Natural killer cell (primary cell): ENCODE measurements at regions of chr12 and their contacts with region 1.

Region 1: DNA sequence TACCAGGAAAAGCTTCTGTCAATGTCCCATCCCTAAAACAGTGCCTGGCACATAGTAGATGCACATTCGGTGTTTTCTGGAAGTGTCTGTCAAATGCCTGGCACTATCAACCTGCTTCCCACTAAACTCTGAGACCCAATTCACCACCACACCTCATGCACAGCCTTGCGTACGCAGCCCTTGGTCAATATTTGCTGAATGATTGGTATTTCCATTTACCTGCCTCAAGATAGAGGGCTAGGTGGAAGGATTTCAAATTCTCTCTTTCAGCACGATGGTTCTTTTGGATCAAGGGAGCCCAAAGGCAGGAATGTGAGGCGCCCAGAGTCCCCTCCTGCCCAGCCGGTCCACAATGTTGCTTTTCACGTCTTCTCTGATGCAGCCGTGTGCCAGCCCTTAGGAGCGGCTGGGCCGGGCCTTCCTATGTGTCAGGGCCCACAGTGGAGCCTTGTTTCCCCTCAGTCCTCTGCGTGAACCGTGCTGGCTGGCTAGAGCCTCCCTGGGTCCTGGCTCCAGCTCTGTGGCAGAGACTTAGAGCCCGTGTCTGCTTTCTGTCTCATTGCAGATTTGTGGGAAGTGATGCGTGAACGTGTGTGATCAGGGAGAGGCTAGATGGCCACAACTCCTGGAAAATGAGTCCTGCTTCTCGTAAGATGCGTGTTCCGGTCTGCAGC is 99.9 kb upstream of the RFLNA start:
- DNase-seq: no peak
- ATAC-seq: no peak
- H3K4me3 ChIP-seq: no peak overlapping the region
- H3K4me3 Mint-ChIP-seq: no peak overlapping the region
- H3K27ac ChIP-seq: no peak overlapping the region
- H3K27ac Mint-ChIP-seq: no peak overlapping the region
- H3K4me1 ChIP-seq: no peaks in the 10 kb centered on the region
- H3K4me1 Mint-ChIP-seq: no peaks in the 10 kb centered on the region
- H3K27me3 ChIP-seq: no peaks in the 10 kb centered on the region
- H3K27me3 Mint-ChIP-seq: peaks cover 0 to 5% of the 10 kb centered on the region in 2 donors
- CTCF ChIP-seq: no peak

Region 2: DNA sequence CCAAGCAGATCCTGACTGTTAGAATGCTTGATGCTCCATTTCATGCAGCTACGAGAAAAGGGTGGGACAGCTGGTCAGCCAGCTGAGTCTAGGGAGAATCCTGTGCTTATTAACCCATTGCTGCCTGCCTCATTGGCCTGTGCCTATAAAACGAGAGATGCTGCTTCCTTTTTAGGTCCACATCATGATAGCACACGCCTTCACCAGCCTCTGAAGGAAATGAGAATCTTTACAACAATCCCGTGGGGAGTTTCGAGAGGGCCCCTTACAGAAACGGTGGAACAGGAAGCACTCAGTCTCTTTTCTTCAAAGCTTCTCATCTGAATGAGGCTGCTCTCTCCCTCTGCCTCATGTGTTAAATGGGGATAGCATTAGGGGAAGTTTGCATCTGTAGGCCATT is 47.5 kb before region 1 on chr12:
- intact Hi-C with region 1: loop called (anchors 5 kb)
- DNase-seq: no peak
- ATAC-seq: no peak
- H3K4me3 ChIP-seq: no peak overlapping the region
- H3K4me3 Mint-ChIP-seq: no peak overlapping the region
- H3K27ac ChIP-seq: no peak overlapping the region
- H3K27ac Mint-ChIP-seq: no peak overlapping the region
- H3K4me1 ChIP-seq: no peaks in the 10 kb centered on the region
- H3K4me1 Mint-ChIP-seq: no peaks in the 10 kb centered on the region
- H3K27me3 ChIP-seq: no peaks in the 10 kb centered on the region
- H3K27me3 Mint-ChIP-seq: peaks cover 14 to 26% of the 10 kb centered on the region in 2 donors
- CTCF ChIP-seq: no peak